ENCODE measurements at regions of chr1 and their contacts with region 1.

Region 1: DNA sequence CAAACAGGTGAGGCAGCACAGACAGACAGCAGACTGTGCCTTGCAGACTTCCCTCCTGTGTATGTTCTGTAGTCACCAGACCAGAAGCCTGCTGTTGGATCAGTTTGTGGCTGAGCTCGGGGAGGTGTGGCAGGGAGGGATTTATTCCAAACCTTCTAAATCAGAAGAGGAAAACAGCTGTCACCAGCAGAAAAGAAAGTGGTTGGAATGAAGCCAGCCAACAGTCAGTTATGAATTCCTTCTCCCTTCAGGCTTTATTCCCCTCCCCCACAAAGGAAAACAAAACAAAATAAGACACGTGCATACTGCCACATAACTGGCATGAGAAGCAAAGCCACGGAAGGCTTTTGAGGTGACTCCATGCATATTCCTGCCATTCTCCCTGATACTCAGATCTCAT is 19.0 kb upstream of the PIGV start:
- DNase-seq: no peak
- ATAC-seq: no peak

Region 2: DNA sequence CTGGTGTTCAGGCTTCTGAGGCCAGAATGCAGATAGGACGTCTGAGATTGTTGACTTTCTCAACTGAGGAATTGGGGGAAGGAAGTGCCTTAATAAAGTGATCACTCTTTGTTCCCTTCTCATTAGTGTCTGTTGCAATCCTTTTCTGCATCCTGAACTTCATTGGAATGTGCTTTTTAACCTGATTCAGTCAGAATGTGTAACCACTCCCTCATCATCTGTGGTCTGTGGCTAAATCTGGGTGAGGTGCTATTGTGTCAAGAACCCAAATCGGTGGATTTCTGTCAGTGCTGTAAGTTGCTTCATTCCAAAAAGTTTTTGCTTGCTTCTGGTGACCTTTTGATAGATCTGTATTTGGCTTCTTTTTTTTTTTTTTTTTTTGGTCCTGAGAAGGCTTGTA is 34.8 kb before region 1 on chr1:
- intact Hi-C with region 1: loop called in 1 of 2 experiments (anchors 5 kb)
- DNase-seq: no peak
- ATAC-seq: peak; percentile 30 to 64